ENCODE measurements at regions of chr14 and their contacts with region 1.

Region 1: GRCh38 chr14:70655110-70655826 is 13.6 kb downstream of the TTC9 start:
- DNase-seq: peak; percentile 54 to 95 (median 82)
- ATAC-seq: peak; percentile 87 to 93
- H3K4me3 Mint-ChIP-seq: peak overlapping the region; percentile 74 to 88 (median 80)
- H3K27ac Mint-ChIP-seq: peak overlapping the region; percentile 96 to 99 (median 98)
- H3K4me1 Mint-ChIP-seq: peaks cover 45 to 97% (median 93%) of the 10 kb centered on the region in 4 donors
- H3K27me3 Mint-ChIP-seq: no peaks in the 10 kb centered on the region

Region 2: DNA sequence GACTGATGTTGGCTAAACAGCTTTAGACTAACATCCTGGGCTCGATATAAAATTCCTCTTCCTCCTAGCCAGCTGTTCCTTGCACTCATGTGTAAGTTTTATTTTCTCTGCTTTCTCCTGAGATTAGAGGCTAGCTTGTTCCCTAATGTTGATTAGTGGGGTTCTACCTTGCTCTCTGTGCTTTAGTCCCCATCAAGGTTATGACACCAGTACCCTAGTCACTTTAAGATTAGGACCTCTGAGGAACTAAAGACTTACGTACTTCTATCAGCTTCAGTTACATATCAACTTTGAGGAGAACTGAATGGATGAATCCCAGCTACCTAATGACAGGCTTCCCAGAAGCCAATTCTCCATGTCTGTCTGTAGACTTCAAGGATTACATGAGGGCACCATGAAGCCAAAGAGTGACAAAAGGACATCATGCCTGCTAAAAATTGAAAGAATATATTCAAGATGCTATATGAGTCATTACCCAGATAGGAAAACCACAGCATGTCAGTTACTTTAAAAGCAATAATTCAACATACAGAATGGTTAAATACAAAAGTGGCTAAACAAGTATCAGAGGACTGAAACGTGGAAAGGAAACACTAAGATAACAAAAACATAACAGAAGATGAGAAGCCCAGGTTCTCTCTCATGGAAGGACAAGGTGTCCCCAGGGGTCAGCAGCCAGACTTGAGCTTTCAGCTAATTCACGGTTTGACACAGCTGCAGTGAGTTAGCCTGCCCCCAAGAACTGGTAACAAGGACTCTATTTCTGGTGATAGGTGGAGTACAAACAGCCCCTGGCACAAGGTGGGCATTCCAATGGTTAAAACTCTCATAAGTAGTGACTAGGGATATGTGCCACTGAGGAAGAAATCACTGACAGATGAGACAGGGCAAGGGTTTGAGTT is 140.8 kb before region 1 on chr14:
- POLR2A ChIA-PET with region 1: no interaction called
- DNase-seq: no peak
- ATAC-seq: no peak
- H3K4me3 Mint-ChIP-seq: no peak overlapping the region
- H3K27ac Mint-ChIP-seq: peak overlapping the region in 2 of 10 donors; percentile 49 to 65
- H3K4me1 Mint-ChIP-seq: peaks cover 0 to 10% (median 5%) of the 10 kb centered on the region in 4 donors
- H3K27me3 Mint-ChIP-seq: no peaks in the 10 kb centered on the region

Region 3: DNA sequence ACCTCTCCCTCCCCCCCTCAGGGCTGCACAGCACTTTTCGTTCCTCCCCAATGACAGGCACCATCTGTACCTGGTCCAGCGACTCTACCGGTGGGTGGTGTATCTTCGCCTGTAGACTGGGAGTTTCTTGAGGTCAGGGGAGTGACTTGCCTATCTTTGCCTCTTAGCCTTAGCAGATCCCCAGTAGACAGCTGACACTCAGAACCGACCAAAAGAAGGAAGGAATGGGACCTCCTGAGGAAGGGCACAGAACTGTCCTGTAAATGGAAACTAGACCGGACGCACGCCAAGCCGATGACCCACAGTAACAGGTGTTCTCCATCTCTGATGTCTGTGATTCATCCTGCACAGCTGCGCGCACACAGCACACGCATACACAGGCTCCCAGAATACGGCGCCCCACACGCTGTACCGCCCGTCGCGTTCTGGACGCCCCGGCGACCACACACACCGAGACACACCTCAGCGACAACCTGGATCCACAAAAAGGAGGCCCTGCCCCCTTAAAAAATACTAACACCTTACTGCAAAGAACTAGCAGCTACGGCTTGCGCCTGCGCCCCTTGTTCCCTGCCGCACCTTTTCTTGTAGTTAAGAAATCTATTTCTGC is 14.2 kb before region 1 on chr14:
- POLR2A ChIA-PET with region 1: interaction called, 416 read pairs
- DNase-seq: peak in 9 of 10 donors; percentile 29 to 86 (median 56)
- ATAC-seq: peak; percentile 67 to 76
- H3K4me3 Mint-ChIP-seq: peak overlapping the region; percentile 96 to 99 (median 98)
- H3K27ac Mint-ChIP-seq: peak overlapping the region; percentile 86 to 98 (median 96)
- H3K4me1 Mint-ChIP-seq: peaks cover 21 to 68% (median 52%) of the 10 kb centered on the region in 4 donors
- H3K27me3 Mint-ChIP-seq: peaks cover 0 to 3% (median 0%) of the 10 kb centered on the region in 5 donors

Region 4: GRCh38 chr14:70665191-70665916 is 10.1 kb after region 1 on chr14:
- POLR2A ChIA-PET with region 1: interaction called, 13 read pairs
- DNase-seq: no peak
- ATAC-seq: no peak
- H3K4me3 Mint-ChIP-seq: peak overlapping the region; percentile 33 to 78 (median 72)
- H3K27ac Mint-ChIP-seq: peak overlapping the region; percentile 89 to 98 (median 94)
- H3K4me1 Mint-ChIP-seq: peaks cover 38 to 83% (median 77%) of the 10 kb centered on the region in 4 donors
- H3K27me3 Mint-ChIP-seq: no peaks in the 10 kb centered on the region

Region 5: DNA sequence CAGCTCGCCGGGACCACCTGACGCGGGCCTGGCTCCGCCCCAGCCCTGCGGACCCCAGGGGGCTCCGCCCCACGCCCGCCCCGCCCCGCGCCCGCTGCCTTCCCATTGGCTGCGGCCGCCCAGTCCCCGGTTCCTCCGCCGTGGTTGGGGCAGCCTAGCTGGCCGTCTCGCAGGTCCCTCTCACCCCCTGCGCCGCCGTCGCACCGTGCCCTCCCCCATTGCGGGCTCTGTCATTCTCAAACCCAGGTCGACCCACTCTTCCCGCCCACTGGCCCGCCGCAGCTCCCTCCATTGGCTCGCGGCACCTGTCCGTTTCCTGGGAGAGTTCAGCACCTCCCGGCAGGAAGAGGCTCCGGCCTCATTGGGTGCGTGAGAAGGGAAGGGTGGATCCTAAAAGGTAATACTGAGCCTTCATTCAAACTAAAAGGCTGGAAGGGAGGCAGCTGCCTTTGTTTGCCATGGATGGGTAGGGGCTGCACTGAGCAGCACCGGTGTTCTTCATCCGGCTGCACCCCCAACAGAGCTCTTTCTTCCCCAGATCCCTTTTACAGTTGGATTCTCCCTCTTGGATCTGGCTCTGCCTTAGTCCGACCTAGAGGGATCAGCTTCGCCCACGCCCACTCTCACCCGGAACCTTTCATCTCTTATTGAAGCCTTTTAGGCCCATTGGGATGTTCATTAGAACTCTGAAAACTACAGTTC is 154.4 kb after region 1 on chr14:
- POLR2A ChIA-PET with region 1: interaction called, 11 read pairs
- DNase-seq: peak; percentile 69 to 93 (median 84)
- ATAC-seq: peak; percentile 82 to 83
- H3K4me3 Mint-ChIP-seq: no peak overlapping the region
- H3K27ac Mint-ChIP-seq: peak overlapping the region in 7 of 10 donors; percentile 55 to 93 (median 88)
- H3K4me1 Mint-ChIP-seq: peaks cover 11 to 14% (median 12%) of the 10 kb centered on the region in 4 donors
- H3K27me3 Mint-ChIP-seq: peaks cover 0 to 6% (median 0%) of the 10 kb centered on the region in 5 donors

Measured in naive thymus-derived CD8-positive, alpha-beta T cell (primary cell).